Activated CD8-positive, alpha-beta T cell treated with anti-CD3 and anti-CD28 coated beads, Interleukin-2, amount 10 ng/mL, durations not matched to agents 7 days and 5 days (primary cell): ENCODE measurements at regions of chr1 and their contacts with region 1.

Region 1: GRCh38 chr1:228500901-228501871 is 14.0 kb downstream of the RNF187 start:
- DNase-seq: peak; percentile 95
- ATAC-seq: peak; percentile 97
- H3K4me3 Mint-ChIP-seq: peak overlapping the region; percentile 70
- H3K27ac Mint-ChIP-seq: peak overlapping the region; percentile 81
- H3K4me1 Mint-ChIP-seq: peaks cover 42% of the 10 kb centered on the region
- H3K27me3 Mint-ChIP-seq: peaks cover 6% of the 10 kb centered on the region

Region 2: GRCh38 chr1:228457396-228458176 is 43.6 kb before region 1 on chr1:
- CTCF ChIA-PET with region 1: interaction called, 39 read pairs
- POLR2A ChIA-PET with region 1: interaction called, 24 read pairs
- DNase-seq: peak; percentile 95
- ATAC-seq: peak; percentile 82
- H3K4me3 Mint-ChIP-seq: peak overlapping the region; percentile 99
- H3K27ac Mint-ChIP-seq: peak overlapping the region; percentile 100
- H3K4me1 Mint-ChIP-seq: peaks cover 51% of the 10 kb centered on the region
- H3K27me3 Mint-ChIP-seq: no peaks in the 10 kb centered on the region

Region 3: GRCh38 chr1:228464487-228464983 is 36.7 kb before region 1 on chr1:
- CTCF ChIA-PET with region 1: interaction called, 39 read pairs
- POLR2A ChIA-PET with region 1: interaction called, 35 read pairs
- DNase-seq: peak; percentile 97
- ATAC-seq: peak; percentile 87
- H3K4me3 Mint-ChIP-seq: peak overlapping the region; percentile 93
- H3K27ac Mint-ChIP-seq: peak overlapping the region; percentile 95
- H3K4me1 Mint-ChIP-seq: peaks cover 65% of the 10 kb centered on the region
- H3K27me3 Mint-ChIP-seq: peaks cover 4% of the 10 kb centered on the region

Region 4: GRCh38 chr1:228471762-228472398 is 29.3 kb before region 1 on chr1:
- CTCF ChIA-PET with region 1: interaction called, 32 read pairs
- POLR2A ChIA-PET with region 1: interaction called, 3 read pairs
- DNase-seq: peak; percentile 64
- ATAC-seq: peak; percentile 85
- H3K4me3 Mint-ChIP-seq: no peak overlapping the region
- H3K27ac Mint-ChIP-seq: peak overlapping the region; percentile 37
- H3K4me1 Mint-ChIP-seq: peaks cover 43% of the 10 kb centered on the region
- H3K27me3 Mint-ChIP-seq: peaks cover 7% of the 10 kb centered on the region

Region 5: DNA sequence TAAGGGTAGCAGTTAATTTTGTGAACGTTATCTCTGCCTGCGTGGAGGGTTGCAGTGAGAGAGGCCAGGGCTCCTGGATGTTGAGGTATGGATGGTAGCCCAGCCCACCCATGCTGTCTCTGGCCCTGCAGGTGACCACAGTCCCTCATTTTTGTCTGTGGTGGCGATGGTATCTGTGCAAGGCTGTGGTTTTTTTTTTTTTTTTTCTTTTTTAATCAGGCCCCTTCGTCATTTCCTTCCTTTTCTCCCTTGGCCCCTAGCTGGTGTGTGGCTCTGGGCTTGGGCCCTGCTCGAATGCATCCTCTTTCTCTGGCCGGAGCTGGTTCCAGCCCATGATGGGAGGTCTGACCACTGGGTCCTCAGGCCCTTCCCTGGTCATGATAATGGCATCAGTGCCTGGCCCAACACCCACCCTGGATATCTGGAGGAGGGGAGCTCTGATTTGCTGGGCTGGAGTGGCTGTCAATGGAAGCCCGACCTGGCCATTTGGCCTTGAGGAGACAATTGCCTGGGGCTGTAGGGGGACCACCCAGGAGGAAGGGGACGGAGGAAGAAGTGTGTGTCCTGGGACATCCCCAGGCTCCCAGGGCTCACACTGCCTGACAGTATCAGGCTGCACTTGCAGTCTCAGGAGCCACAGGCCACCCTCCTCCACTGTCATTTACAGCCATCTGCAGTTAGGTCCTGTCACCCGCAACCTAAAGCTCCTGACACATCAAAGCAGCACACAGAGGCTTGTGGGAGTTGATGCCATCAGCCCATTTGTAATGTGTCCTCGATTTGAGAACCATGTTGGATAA is 22.1 kb before region 1 on chr1:
- CTCF ChIA-PET with region 1: interaction called, 32 read pairs
- POLR2A ChIA-PET with region 1: interaction called, 3 read pairs
- DNase-seq: peak; percentile 59
- ATAC-seq: peak; percentile 81
- H3K4me3 Mint-ChIP-seq: peak overlapping the region; percentile 73
- H3K27ac Mint-ChIP-seq: peak overlapping the region; percentile 98
- H3K4me1 Mint-ChIP-seq: peaks cover 66% of the 10 kb centered on the region
- H3K27me3 Mint-ChIP-seq: no peaks in the 10 kb centered on the region

Region 6: DNA sequence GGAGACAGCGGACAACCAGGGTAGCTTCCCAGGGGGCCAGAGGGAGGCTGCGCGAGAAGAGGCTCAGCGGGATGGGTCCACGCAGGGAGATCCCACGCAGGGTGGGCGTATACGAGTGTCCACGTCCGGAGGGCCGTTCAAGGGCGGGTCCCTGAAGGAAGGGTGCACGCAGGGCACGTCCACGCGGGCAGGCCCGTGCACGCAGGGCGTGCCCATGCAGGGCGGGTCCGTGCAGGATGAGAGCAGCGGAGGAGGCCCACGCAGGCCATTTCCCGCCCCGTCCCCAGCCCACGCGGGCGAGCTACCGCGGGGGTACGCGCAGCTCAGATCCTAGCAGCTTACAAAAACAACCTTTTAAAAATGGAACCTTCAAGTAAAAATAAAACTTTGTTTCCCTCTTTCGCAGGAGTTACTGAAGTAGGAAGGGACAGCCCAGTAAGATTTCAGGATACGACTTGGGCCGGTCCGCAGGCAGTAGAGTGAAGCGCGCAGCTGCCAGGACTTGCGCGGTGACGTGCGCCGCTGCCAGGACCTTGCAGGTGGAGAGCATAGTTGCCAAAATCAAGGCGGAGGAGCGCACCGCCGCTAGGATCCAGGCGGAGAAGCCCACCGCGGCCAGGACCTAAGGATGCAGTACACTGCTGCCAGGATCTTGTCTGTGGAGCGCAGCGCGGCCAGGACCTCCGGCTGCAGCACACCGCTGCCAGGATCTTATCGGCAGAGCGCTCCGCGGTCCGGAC is 14.4 kb before region 1 on chr1:
- CTCF ChIA-PET with region 1: interaction called, 53 read pairs
- POLR2A ChIA-PET with region 1: interaction called, 11 read pairs
- DNase-seq: peak; percentile 86
- ATAC-seq: peak; percentile 71
- H3K4me3 Mint-ChIP-seq: peak overlapping the region; percentile 88
- H3K27ac Mint-ChIP-seq: peak overlapping the region; percentile 100
- H3K4me1 Mint-ChIP-seq: peaks cover 58% of the 10 kb centered on the region
- H3K27me3 Mint-ChIP-seq: no peaks in the 10 kb centered on the region

Region 7: DNA sequence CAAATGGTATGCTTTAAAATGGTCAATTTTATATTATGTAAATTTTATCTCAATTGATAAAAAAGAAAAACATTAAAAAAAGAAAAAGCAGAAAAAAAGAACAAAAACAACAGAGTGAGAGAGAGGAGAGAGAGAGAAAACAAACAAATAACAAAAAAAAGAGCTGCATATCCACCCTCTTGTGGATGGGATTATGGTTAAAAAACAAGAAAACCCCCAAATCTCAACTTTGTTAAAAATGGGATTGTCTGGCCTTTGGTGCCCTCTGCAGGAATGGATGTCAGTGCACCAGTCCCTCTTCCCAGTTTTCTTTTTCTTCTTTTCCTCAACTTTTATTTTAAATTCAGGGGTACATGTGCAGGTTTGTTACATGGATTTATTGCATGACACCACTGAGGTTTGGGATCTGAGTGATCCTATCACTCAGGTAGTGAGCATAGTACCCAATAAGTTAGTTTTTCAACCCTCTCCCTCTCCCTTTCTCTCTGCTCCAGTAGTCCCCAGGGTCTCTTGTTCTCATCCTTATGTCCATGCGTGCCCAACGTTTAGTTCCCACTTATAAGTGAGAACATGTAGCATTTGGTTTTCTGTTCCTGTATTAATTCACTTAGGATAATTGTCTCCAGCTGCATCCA is 14.1 kb after region 1 on chr1:
- CTCF ChIA-PET with region 1: interaction called, 62 read pairs
- POLR2A ChIA-PET with region 1: interaction called, 3 read pairs
- DNase-seq: peak; percentile 54
- ATAC-seq: peak; percentile 54
- H3K4me3 Mint-ChIP-seq: no peak overlapping the region
- H3K27ac Mint-ChIP-seq: no peak overlapping the region
- H3K4me1 Mint-ChIP-seq: peaks cover 33% of the 10 kb centered on the region
- H3K27me3 Mint-ChIP-seq: peaks cover 53% of the 10 kb centered on the region